ENCODE measurements at regions of chr15 and their contacts with region 1.

Region 1: GRCh38 chr15:36598529-36599177 is 19.2 kb downstream of the CDIN1 start:
- DNase-seq: no peak
- H3K4me3 ChIP-seq: no peak overlapping the region
- H3K27ac ChIP-seq: no peak overlapping the region
- H3K4me1 ChIP-seq: no peaks in the 10 kb centered on the region
- H3K27me3 ChIP-seq: no peaks in the 10 kb centered on the region
- CTCF ChIP-seq: no peak

Region 2: GRCh38 chr15:36614016-36614415 is 15.4 kb after region 1 on chr15:
- CTCF ChIA-PET with region 1: no interaction called
- POLR2A ChIA-PET with region 1: interaction called, 16 read pairs
- intact Hi-C with region 1: no loop called
- DNase-seq: no peak
- H3K4me3 ChIP-seq: no peak overlapping the region
- H3K27ac ChIP-seq: no peak overlapping the region
- H3K4me1 ChIP-seq: no peaks in the 10 kb centered on the region
- H3K27me3 ChIP-seq: no peaks in the 10 kb centered on the region
- CTCF ChIP-seq: no peak